ENCODE measurements at regions of chr1 and their contacts with region 1.

Region 1: DNA sequence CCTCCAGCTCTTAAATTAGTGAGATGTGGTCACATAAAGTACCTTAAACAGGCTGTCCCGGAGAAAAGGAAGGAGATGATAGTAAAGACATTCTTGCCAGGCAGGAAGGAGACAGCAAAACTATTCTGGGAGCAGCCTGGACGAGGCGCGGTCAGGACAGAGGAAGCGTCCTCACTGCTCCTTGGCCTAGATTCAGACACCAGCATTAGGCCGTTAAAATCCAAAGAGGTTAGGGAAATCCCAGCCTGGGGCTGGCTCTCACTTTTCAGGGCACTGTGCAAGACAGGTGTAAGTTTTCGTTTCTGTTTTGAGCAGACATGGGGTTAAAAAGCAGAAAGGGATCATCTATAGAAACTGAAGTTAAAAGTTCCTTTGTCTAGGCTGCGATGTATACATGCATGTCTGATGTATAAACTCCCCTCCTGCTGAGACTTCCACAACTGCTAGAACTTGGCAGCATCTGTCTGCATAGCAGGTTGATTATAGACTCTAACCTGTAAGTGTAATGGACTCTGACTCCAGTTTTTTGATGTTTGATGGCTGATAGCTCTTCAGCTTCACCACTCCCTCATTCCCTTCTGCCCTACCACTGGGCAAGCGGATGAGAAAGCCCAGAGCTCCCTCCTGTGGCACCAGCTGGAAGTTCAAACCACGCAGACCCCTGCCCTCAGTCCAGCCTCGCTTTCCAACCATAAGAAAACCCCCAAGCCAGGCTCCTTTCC is 21.5 kb downstream of the STPG1 start:
- DNase-seq: peak; percentile 79
- H3K4me3 Mint-ChIP-seq: peak overlapping the region; percentile 68
- H3K27ac Mint-ChIP-seq: peak overlapping the region; percentile 82
- H3K4me1 Mint-ChIP-seq: peaks cover 27% of the 10 kb centered on the region
- H3K27me3 Mint-ChIP-seq: no peaks in the 10 kb centered on the region

Region 2: GRCh38 chr1:24186993-24187805 is 204.8 kb before region 1 on chr1 and contains the start of gene IFNLR1:
- CTCF ChIA-PET with region 1: interaction called, 87 read pairs
- POLR2A ChIA-PET with region 1: interaction called, 3 read pairs
- intact Hi-C with region 1: no loop called
- DNase-seq: peak; percentile 91
- H3K4me3 Mint-ChIP-seq: peak within 1 kb of the TSS; percentile 80
- H3K27ac Mint-ChIP-seq: peak within 1 kb of the TSS; percentile 54
- H3K4me1 Mint-ChIP-seq: peaks cover 48% of the 10 kb centered on the region
- H3K27me3 Mint-ChIP-seq: peaks cover 2% of the 10 kb centered on the region
- total RNA-seq, gene IFNLR1: 6.2 to 10.0 TPM

Region 3: DNA sequence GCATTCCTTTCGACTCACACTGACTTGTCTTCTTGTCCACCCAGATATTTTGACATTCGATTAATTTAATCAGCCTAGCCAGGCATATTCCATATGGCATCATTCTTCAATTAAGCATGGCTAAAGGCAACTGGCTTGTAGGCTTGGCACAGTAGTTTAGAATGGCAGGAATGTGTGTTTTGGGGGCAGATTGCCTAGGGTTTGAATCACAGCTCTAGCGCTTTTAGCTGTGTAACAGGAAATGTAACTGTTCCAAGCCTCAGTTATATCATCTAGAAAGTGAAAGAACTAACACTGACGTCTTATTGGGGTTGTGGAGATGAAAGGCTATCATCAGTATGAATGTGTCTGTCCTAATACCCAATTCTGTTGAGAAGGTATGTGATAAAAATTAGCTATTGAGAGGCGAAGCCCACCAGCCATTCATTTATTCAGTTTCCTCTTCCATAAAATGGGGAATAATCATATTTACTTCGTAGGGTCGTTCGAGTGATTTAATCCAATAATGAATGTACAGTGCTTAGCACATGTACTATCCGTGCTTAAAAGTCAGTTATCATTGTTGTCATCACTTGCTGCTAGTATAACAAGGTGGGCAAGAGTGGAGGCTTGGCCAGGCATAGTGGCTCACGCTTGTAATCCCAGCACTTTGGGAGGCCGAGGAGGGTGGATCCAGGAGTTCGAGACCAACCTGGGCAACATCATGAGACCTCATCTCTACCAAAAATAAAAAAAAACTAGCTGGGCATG is 114.4 kb before region 1 on chr1:
- CTCF ChIA-PET with region 1: interaction called, 13 read pairs
- POLR2A ChIA-PET with region 1: no interaction called
- intact Hi-C with region 1: no loop called
- DNase-seq: peak; percentile 40
- H3K4me3 Mint-ChIP-seq: no peak overlapping the region
- H3K27ac Mint-ChIP-seq: peak overlapping the region; percentile 20
- H3K4me1 Mint-ChIP-seq: peaks cover 9% of the 10 kb centered on the region
- H3K27me3 Mint-ChIP-seq: peaks cover 20% of the 10 kb centered on the region

Region 4: GRCh38 chr1:24351918-24352627 is 40.0 kb before region 1 on chr1:
- CTCF ChIA-PET with region 1: interaction called, 18 read pairs
- POLR2A ChIA-PET with region 1: no interaction called
- intact Hi-C with region 1: no loop called
- DNase-seq: peak; percentile 87
- H3K4me3 Mint-ChIP-seq: no peak overlapping the region
- H3K27ac Mint-ChIP-seq: peak overlapping the region; percentile 58
- H3K4me1 Mint-ChIP-seq: peaks cover 36% of the 10 kb centered on the region
- H3K27me3 Mint-ChIP-seq: peaks cover 1% of the 10 kb centered on the region

Region 5: DNA sequence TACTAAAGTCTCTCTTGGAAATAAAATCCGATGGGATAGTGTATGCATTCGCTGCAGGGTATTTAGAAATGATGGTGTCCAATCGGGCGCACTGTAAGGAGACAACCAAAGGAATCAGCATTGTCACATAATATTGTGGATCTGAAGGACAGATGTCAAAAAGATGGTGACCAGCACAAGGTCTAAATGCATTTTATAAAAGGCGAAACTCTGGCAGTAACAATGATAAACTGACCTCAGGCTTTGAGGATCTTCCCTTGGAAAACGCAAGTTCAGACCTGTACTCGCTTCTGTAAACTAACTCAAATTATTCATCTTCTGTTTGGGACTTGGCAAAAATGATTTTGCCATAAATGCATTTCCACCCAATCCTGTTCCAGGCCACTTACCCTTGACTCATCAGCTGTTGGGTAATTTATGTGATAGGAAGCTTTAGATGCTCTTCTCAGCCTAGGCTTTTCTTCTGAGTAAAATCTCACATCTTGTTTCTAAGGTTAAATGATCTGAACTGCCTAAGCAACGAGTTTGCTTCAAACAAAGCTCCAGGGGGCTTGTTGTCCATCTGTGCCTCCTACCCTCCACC is 12.2 kb before region 1 on chr1:
- CTCF ChIA-PET with region 1: interaction called, 26 read pairs
- POLR2A ChIA-PET with region 1: no interaction called
- intact Hi-C with region 1: no loop called
- DNase-seq: no peak
- H3K4me3 Mint-ChIP-seq: no peak overlapping the region
- H3K27ac Mint-ChIP-seq: no peak overlapping the region
- H3K4me1 Mint-ChIP-seq: peaks cover 10% of the 10 kb centered on the region
- H3K27me3 Mint-ChIP-seq: no peaks in the 10 kb centered on the region

Region 6: DNA sequence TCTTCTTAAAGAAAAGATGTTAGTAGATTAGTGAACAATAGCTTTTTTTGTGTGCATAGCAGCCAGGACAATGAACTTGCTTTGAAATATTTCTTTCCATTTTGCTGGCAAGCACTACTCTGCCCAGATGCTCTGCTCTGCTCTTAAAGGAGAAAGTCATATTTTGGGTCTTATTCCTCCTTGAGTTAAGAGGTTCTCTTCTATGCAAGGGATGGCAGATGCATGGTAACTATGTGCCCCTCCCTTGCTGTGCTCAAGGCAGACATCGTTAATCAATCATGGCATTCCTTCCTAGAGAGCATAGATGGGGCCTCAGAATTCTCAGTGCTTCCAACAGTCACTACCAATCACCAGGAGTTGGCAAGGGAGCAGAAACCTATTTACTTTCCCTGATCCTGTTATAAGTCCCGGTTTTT is 51.2 kb after region 1 on chr1:
- CTCF ChIA-PET with region 1: no interaction called
- POLR2A ChIA-PET with region 1: no interaction called
- intact Hi-C with region 1: no loop called
- DNase-seq: no peak
- H3K4me3 Mint-ChIP-seq: no peak overlapping the region
- H3K27ac Mint-ChIP-seq: no peak overlapping the region
- H3K4me1 Mint-ChIP-seq: peaks cover 3% of the 10 kb centered on the region
- H3K27me3 Mint-ChIP-seq: no peaks in the 10 kb centered on the region

Region 7: GRCh38 chr1:24586970-24587820 is 195.2 kb after region 1 on chr1:
- CTCF ChIA-PET with region 1: interaction called, 58 read pairs
- POLR2A ChIA-PET with region 1: no interaction called
- intact Hi-C with region 1: no loop called
- DNase-seq: peak; percentile 49
- H3K4me3 Mint-ChIP-seq: no peak overlapping the region
- H3K27ac Mint-ChIP-seq: peak overlapping the region; percentile 31
- H3K4me1 Mint-ChIP-seq: peaks cover 5% of the 10 kb centered on the region
- H3K27me3 Mint-ChIP-seq: peaks cover 2% of the 10 kb centered on the region